ENCODE measurements at regions of chr14 and their contacts with region 1.

Region 1: DNA sequence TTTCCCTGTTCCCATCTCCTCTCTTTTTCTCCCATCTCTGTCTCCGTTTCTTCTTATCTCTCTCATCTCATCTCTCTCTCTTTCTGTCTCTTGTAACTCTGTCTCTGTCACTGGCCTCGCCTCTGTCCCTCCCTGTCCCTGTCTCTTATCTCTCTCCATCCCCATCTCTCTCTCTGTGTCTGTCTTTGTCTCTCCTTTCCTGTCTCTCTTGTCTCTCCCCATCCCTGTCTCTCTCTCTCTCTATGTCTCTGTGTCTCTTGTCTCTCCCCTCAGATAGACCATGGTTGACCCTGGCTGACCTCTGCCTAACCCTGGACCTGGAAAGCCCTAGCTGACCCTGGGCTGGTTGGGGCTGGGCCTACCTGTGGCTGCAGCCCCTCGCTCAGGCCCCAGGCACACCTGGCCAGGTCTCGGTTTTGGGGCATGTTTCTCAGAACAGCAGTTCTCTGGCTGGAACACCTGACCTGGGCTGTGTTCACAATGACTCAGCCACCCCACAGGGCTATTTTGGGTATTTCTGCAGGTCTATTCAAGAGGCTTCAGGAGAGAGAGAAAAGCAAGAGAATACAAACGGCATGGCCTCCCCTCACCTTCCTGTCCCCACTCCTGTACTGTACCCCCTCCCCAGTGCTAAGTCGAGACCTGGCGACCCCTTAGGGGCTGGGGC is 174.4 kb downstream of the TMEM121 start:
- DNase-seq: peak; percentile 26

Region 2: GRCh38 chr14:105581551-105582341 is 119.0 kb before region 1 on chr14:
- intact Hi-C with region 1: loop called (anchors 2 to 5 kb)
- DNase-seq: no peak

Region 3: DNA sequence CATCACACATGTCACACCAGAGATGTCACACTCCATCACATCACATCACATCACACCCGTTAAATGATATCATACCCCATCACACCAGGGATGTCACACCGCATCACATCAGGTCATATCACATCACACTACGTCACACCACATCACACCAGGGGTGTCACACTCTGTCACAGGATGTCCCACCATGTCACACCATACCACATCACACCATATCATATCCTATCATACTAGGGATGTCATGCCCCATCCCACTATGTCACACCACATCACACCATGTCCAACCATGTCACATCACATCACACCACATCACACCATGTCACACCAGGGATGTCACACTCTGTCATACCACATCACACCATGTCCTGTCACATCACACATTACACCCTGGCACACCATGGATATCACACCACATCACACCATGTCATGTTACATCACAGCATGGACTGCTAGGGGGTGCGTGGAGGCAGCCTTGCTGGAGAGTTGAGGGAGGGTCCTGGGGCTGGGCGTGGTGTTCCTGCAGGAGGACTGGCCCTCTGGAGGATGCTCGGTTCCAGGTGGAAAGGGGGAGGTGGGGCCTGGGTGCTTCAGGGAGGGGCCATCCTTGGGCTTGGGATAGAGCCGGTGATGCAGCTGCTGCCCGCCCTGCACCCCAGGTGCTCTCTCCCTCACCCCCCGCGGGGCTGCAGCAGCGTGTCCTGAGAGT is 39.8 kb before region 1 on chr14:
- intact Hi-C with region 1: no loop called
- DNase-seq: no peak

Measured in posterior vena cava (tissue), 2 donors.